OCI-LY7 (cell line): ENCODE measurements at regions of chr16 and their contacts with region 1.

Region 1: GRCh38 chr16:30698139-30698815 is 694 bp upstream of the SRCAP start:
- DNase-seq: peak; percentile 99
- H3K4me3 ChIP-seq: peak overlapping the region; percentile 97
- H3K27ac ChIP-seq: peak overlapping the region; percentile 87
- H3K4me1 ChIP-seq: peaks cover 26% of the 10 kb centered on the region
- CTCF ChIP-seq: no peak

Region 2: GRCh38 chr16:30065143-30065850 is 633.0 kb before region 1 on chr16 and contains the start of gene ALDOA:
- CTCF ChIA-PET with region 1: interaction called, 14 read pairs
- POLR2A ChIA-PET with region 1: no interaction called
- intact Hi-C with region 1: no loop called
- DNase-seq: peak; percentile 98
- H3K4me3 ChIP-seq: peak within 1 kb of the TSS; percentile 99
- H3K27ac ChIP-seq: peak within 1 kb of the TSS; percentile 86
- H3K4me1 ChIP-seq: peaks cover 39% of the 10 kb centered on the region
- CTCF ChIP-seq: no peak
- total RNA-seq, gene ALDOA: 646 and 809 TPM in 2 replicates

Region 3: DNA sequence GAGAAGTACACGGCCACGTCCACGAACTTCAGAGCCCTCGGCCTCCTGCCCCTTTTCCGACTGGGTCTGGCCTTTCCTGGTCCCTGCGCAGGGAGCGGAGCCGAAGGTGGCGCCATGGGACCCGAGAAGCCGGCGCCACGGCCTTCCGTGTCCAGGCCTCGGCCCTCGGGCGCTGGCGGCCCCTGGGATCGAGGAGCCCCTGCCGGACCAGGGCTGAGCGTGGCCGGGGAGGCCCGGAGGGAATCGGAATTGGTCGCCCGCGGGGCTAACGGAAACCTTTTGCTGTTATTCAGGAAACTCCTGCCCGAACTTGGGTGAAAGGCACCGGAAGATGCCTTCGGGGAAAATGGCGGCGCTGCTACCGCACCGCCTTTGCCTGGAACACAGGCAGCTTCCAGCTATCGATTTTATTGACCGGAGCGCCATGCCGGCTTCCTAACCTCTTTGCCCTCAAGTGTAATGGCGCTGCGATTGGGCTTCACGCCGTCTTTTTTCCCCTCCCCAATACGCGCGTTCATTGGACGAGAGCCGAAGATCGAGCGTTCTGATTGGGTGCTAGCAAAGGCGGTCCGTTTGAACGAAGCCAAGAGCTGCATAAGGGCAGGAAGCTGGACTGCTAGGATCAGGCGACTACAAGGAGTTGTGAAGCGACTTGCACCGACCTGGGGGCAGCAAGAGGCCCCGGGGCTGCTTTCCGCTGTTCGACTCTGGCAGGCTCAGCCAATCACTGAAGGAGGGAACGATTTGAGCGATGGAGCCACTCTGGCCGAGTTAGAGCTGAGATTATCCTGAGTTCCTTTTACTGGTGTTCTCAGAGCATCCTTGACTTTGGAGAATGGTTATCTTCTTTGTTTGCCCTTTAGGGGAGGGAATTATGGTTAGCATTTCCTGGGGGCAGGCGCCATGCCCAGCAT is 88.1 kb before region 1 on chr16 and contains the start of gene ZNF689:
- CTCF ChIA-PET with region 1: no interaction called
- POLR2A ChIA-PET with region 1: interaction called, 3 read pairs
- intact Hi-C with region 1: loop called (anchors 1 kb)
- DNase-seq: peak; percentile 98
- H3K4me3 ChIP-seq: peak within 1 kb of the TSS; percentile 91
- H3K27ac ChIP-seq: peak within 1 kb of the TSS; percentile 70
- H3K4me1 ChIP-seq: peaks cover 20% of the 10 kb centered on the region
- CTCF ChIP-seq: no peak; the same call in 1 of the 2 replicates
- total RNA-seq, gene ZNF689: 13.1 and 15.0 TPM in 2 replicates

Region 4: GRCh38 chr16:30621765-30622164 is 76.5 kb before region 1 on chr16:
- CTCF ChIA-PET with region 1: no interaction called
- POLR2A ChIA-PET with region 1: no interaction called
- intact Hi-C with region 1: no loop called
- DNase-seq: no peak
- H3K4me3 ChIP-seq: no peak overlapping the region
- H3K27ac ChIP-seq: no peak overlapping the region
- H3K4me1 ChIP-seq: peaks cover 4% of the 10 kb centered on the region
- CTCF ChIP-seq: no peak

Region 5: DNA sequence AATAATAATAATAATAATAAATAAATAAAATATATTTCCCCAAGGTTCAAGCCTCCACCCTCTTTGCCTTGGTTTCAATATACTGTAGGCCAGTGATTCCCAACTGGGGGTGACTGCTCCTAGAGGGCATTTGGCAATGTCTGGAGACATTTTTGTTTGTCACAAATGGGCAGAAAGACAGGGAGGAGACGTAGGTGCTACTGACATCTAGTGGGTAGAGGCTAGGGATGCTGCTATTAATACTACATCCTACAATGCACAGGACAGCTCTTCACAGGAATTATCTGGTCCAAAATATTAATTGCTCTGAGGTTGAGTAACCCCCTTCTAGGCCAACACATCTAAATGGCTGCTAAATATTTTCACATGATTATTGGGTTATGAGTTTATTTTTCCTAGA is 60.3 kb before region 1 on chr16:
- CTCF ChIA-PET with region 1: no interaction called
- POLR2A ChIA-PET with region 1: no interaction called
- intact Hi-C with region 1: no loop called
- DNase-seq: peak; percentile 72
- H3K4me3 ChIP-seq: no peak overlapping the region
- H3K27ac ChIP-seq: no peak overlapping the region
- H3K4me1 ChIP-seq: peaks cover 14% of the 10 kb centered on the region
- CTCF ChIP-seq: peak; percentile 81

Region 6: DNA sequence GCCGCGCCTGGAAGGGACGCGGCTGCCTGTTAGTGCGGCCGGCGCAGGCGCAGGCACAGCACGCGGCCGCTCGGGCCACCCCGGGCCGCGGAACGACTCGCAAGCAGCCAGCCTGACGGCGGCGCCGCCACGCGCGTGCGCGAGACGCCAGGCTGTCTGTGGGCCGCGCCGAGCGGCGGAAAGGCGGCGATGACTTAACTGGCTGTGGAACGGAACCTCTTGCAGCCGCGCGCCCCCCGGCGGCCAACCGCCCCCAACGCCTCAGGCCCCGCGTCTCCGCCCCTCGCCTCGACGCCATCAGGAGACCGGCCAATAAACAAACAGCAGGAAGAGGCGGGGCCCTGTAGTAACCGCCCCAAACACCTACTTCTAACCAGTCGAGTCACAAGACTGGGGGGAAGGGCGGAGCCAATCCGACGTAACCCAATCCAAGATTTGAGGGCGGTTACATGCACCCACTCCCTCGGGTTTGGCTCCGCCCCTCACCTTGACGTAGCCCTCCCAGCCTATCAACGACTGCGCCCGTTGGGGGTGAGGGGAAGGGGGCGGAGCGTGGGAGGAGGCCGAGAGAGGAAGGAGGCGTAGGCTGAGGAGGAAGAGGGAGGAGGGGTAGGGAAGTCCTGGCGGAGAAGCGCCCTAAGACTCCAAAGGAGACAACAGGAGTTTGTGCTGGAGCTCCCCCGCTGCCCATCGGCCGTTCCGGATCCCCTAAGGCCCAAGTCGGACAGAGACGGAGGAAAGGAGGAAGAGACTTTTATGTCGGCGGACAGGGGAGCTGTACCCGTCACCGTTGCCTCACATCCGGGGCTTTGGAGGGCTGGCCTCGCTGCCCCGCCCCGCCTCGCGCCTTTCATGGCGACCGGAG is 40.2 kb before region 1 on chr16 and contains the start of gene FBRS:
- CTCF ChIA-PET with region 1: interaction called, 10 read pairs
- POLR2A ChIA-PET with region 1: interaction called, 5 read pairs
- intact Hi-C with region 1: loop called (anchors 1 kb)
- DNase-seq: peak; percentile 100
- H3K4me3 ChIP-seq: peak within 1 kb of the TSS; percentile 99
- H3K27ac ChIP-seq: peak within 1 kb of the TSS; percentile 87
- H3K4me1 ChIP-seq: peaks cover 22% of the 10 kb centered on the region
- CTCF ChIP-seq: peak; percentile 85
- total RNA-seq, gene FBRS: 31.8 and 36.8 TPM in 2 replicates

Region 7: GRCh38 chr16:30820952-30821760 is 122.9 kb after region 1 on chr16:
- CTCF ChIA-PET with region 1: no interaction called
- POLR2A ChIA-PET with region 1: interaction called, 11 read pairs
- intact Hi-C with region 1: no loop called
- DNase-seq: no peak
- H3K4me3 ChIP-seq: no peak overlapping the region
- H3K27ac ChIP-seq: no peak overlapping the region
- H3K4me1 ChIP-seq: no peaks in the 10 kb centered on the region
- CTCF ChIP-seq: no peak